ENCODE measurements at regions of chr15 and their contacts with region 1.

Region 1: DNA sequence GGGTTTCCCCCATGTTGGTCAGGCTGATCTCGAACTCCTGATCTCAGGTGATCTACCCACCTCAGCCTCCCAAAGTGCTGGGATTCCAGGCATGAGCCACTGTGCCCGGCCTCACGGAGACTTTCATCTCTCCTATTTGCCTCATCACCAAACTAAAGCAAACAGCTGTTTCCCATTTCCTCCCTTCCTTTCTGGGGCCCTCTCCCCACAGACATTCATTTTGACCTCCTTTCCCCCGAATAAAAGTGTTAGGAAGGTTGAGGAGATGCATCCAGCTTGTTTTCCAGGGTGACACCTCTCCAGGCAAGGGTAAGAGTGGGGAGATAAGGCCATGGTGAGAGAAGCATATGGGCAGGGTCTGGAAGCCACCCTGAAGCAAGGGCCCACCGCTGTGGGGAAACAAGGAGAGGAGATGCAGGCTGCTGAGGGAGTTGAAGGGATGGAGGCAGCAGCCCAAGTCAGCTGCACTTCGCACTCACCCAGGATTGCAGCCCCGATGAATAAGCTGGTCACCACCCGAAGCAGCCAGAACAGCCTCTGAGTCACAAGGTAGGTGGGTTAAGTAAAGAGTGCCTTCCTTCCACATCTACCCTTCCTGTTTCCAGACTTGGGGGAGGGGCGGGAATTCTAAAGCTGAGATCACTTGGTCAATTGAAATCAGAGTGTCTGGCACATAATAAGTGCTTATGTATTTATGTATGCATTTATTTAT is 7.7 kb downstream of the DUOXA2 start:
- DNase-seq: peak; percentile 11 to 63 (median 30)
- H3K4me3 ChIP-seq: no peak overlapping the region
- H3K4me3 Mint-ChIP-seq: peak overlapping the region in 1 of 2 donors; percentile 59
- H3K27ac ChIP-seq: no peak overlapping the region
- H3K27ac Mint-ChIP-seq: peak overlapping the region in 1 of 7 donors; percentile 34
- H3K4me1 ChIP-seq: peaks cover 8 to 16% of the 10 kb centered on the region in 2 donors
- H3K4me1 Mint-ChIP-seq: peaks cover 20% of the 10 kb centered on the region
- H3K27me3 ChIP-seq: peaks cover 21 to 28% of the 10 kb centered on the region in 2 donors
- H3K27me3 Mint-ChIP-seq: peaks cover 35 to 55% (median 44%) of the 10 kb centered on the region in 3 donors
- CTCF ChIP-seq: no peak

Region 2: DNA sequence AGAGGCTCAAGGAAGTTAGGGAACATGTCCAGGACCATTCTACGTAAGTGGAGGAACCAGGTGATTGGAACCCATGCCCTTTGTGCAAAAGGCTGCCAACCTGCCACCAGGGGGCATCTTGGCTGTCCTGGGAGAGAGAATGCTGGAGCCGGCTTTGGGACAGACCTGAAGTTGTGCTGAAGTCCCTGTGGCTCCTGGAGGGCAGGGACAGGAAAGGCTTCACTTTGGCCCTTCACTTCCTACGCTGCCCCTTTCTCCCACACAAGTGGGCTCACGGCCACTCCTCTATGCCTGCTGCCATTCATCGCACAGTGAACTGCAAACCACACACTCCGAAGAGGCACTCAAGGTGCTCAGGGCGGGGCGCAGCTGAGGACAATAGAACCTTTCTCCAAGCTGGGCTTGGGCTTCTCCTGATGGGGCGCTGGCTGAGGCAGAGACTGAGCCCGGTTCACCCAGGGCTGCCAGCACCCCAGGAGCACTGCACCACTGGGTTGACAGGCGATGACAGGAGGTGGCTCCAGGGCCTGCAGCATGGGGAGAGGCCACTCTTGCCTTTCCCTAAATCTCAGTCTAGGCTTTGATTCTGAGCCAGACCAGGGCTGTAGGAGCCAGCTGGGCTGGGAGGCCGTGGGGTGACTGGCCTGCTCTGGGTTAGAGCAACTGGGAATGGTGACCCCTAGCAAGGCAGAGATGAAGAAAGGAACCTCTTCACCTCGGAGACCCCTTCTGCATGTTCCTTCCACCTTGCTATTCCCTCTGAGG is 57.5 kb after region 1 on chr15:
- intact Hi-C with region 1: no loop called
- DNase-seq: peak in 2 of 3 donors; percentile 32 to 36
- H3K4me3 ChIP-seq: no peak overlapping the region
- H3K4me3 Mint-ChIP-seq: no peak overlapping the region
- H3K27ac ChIP-seq: no peak overlapping the region
- H3K27ac Mint-ChIP-seq: no peak overlapping the region
- H3K4me1 ChIP-seq: peaks cover 11 to 15% of the 10 kb centered on the region in 2 donors
- H3K4me1 Mint-ChIP-seq: peaks cover 22% of the 10 kb centered on the region
- H3K27me3 ChIP-seq: no peaks in the 10 kb centered on the region
- H3K27me3 Mint-ChIP-seq: peaks cover 0 to 8% (median 0%) of the 10 kb centered on the region in 3 donors
- CTCF ChIP-seq: peak; percentile 64

Region 3: DNA sequence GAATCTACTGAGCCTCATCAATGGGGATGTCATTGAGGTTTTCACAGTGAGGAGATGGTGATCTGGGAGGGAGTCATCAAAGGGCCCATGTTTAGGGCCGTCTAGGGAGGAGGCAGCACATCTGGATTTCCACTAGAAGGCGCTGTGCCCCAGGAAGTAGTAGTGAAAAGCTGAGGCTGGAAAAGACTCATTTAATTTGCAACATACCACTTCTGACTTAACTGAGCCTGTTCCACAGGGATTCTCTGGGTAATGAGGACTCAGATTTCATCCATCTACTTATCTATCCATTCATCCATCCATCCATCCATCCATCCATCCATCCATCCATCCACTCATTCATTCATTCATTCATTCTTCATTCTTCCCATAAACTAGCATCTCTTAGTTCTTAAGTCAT is 83.3 kb after region 1 on chr15:
- intact Hi-C with region 1: loop called in 1 of 2 experiments (anchors 5 kb)
- DNase-seq: peak; percentile 61 to 72 (median 68)
- H3K4me3 ChIP-seq: no peak overlapping the region
- H3K4me3 Mint-ChIP-seq: no peak overlapping the region
- H3K27ac ChIP-seq: no peak overlapping the region
- H3K27ac Mint-ChIP-seq: no peak overlapping the region
- H3K4me1 ChIP-seq: peaks cover 14 to 19% of the 10 kb centered on the region in 2 donors
- H3K4me1 Mint-ChIP-seq: peaks cover 14% of the 10 kb centered on the region
- H3K27me3 ChIP-seq: no peaks in the 10 kb centered on the region
- H3K27me3 Mint-ChIP-seq: peaks cover 2 to 4% (median 3%) of the 10 kb centered on the region in 3 donors
- CTCF ChIP-seq: peak; percentile 85

Measured in CD14-positive monocyte (primary cell).